Ovary (tissue), 10 donors: ENCODE measurements at regions of chr2 and their contacts with region 1.

Region 1: DNA sequence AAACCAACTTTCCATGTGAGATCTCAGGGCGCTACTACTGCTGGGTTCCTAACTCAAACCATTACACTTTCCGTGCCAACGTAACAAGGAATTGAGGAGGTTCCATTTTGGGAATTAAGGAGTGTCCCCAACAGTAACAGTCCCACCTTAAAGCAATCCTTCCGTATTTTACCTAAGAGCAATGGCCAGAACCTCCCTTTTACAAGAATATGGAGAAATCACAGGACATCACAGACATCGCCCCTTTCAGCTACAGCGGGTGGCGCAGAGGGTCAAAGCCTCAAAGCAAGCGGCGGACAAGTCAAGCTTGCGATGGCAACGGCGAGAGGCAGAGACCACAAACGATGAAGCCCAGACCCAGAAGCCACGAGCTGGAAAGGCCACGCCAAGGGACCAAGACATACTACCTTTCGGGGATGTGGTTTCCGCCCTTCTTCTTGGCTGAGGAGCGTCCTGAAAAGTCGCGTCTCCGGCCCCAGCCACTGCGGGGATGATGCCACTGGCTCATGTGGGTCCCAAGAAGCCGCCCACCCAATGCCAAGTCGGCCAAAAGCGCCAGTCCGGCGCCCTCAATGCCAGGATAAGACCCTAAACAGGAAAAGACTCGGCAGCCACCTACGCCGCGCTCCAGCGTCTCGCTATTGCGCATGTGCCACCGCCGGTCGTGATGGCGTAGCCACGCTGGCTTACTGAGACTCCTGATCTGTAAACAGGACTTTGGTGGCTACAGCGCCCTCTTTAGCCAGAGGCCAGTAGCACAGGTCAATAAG is at the start of gene DUSP11:
- DNase-seq: peak; percentile 91 to 97 (median 94)
- H3K4me3 ChIP-seq: peak within 1 kb of the TSS; percentile 79
- H3K27ac ChIP-seq: peak within 1 kb of the TSS; percentile 70 to 78
- H3K4me1 ChIP-seq: peaks cover 4% of the 10 kb centered on the region
- H3K27me3 ChIP-seq: no peaks in the 10 kb centered on the region
- CTCF ChIP-seq: peak; percentile 82 to 90 (median 89)
- EP300 ChIP-seq: no peak
- POLR2A ChIP-seq: peak; percentile 78
- total RNA-seq, gene DUSP11: 19.2 to 54.3 (median 27.2) TPM

Region 2: GRCh38 chr2:73685770-73686438 is 93.7 kb before region 1 on chr2:
- intact Hi-C with region 1: loop called in 1 of 4 experiments (anchors 10 kb)
- DNase-seq: peak in 2 of 5 donors; percentile 36 to 50
- H3K4me3 ChIP-seq: no peak overlapping the region
- H3K27ac ChIP-seq: no peak overlapping the region
- H3K4me1 ChIP-seq: peaks cover 7% of the 10 kb centered on the region
- H3K27me3 ChIP-seq: no peaks in the 10 kb centered on the region
- CTCF ChIP-seq: no peak
- EP300 ChIP-seq: no peak
- POLR2A ChIP-seq: no peak